WTC11 (cell line): ENCODE measurements at regions of chrX and their contacts with region 1.

Region 1: GRCh38 chrX:119852382-119853353 is at the start of gene UPF3B:
- DNase-seq: peak; percentile 95
- ATAC-seq: peak; percentile 97
- H3K4me3 Mint-ChIP-seq: peak within 1 kb of the TSS; percentile 90
- H3K27ac Mint-ChIP-seq: peak within 1 kb of the TSS; percentile 97
- H3K4me1 Mint-ChIP-seq: 0 out of 2 replicates have a peak, but pooled peaks cover 4% of the 10 kb centered on the region
- H3K27me3 Mint-ChIP-seq: no peaks in the 10 kb centered on the region; the same call in 1 of the 2 replicates
- CTCF ChIP-seq: no peak
- total RNA-seq, gene UPF3B: 19.2 to 23.1 TPM (median 23.0 TPM) in 3 replicates

Region 2: DNA sequence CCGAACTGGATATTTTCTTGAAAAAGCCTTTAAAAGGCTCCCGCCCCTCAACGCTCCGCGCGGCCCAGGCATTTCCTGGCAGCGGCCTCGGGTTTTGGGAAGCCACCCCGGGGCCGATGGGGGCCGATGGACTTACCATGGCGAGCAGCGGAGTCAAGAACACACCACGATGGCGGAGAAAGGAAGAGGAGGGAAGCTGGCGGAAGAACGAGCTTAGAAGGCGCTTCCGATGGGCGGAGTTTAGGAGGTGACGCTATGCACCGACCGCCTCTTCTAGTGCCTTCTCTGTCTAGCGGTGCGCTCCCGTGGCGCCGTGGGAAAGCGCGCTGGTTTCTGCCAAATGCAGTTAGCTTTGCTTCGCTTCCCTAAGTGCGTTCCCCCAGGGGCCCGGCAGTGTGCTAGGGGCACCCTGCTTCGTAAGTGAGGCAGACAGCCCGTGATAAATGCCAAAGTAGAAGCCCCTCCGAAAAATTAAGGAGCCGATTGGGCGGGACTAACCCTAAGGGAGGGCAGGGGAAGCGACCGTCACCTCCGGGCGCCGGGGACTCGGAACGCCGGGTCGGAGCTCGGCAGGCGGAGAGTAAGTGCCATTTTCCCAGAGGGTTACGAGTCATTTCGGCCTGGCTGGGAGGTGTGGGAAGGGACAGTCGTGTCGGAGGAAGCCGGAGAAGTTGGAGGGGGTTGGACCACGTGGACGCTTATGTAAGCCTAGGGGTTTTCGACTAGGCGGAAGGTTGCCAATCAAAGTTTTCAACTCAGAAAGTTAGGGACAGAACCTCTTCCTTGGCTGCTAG is 61.0 kb before region 1 on chrX and contains the start of gene RPL39:
- CTCF ChIA-PET with region 1: no interaction called
- POLR2A ChIA-PET with region 1: interaction called, 15 read pairs
- DNase-seq: peak; percentile 78
- ATAC-seq: peak; percentile 89
- H3K4me3 Mint-ChIP-seq: peak within 1 kb of the TSS; percentile 95
- H3K27ac Mint-ChIP-seq: peak within 1 kb of the TSS; percentile 95
- H3K4me1 Mint-ChIP-seq: peaks cover 22% of the 10 kb centered on the region
- H3K27me3 Mint-ChIP-seq: no peaks in the 10 kb centered on the region
- CTCF ChIP-seq: no peak
- total RNA-seq, gene RPL39: 1,551 to 1,842 TPM (median 1,763 TPM) in 3 replicates

Region 3: GRCh38 chrX:119828446-119828845 is 24.2 kb before region 1 on chrX:
- CTCF ChIA-PET with region 1: no interaction called
- POLR2A ChIA-PET with region 1: no interaction called
- DNase-seq: no peak
- ATAC-seq: no peak
- H3K4me3 Mint-ChIP-seq: no peak overlapping the region
- H3K27ac Mint-ChIP-seq: no peak overlapping the region
- H3K4me1 Mint-ChIP-seq: no peaks in the 10 kb centered on the region
- H3K27me3 Mint-ChIP-seq: no peaks in the 10 kb centered on the region
- CTCF ChIP-seq: no peak

Region 4: DNA sequence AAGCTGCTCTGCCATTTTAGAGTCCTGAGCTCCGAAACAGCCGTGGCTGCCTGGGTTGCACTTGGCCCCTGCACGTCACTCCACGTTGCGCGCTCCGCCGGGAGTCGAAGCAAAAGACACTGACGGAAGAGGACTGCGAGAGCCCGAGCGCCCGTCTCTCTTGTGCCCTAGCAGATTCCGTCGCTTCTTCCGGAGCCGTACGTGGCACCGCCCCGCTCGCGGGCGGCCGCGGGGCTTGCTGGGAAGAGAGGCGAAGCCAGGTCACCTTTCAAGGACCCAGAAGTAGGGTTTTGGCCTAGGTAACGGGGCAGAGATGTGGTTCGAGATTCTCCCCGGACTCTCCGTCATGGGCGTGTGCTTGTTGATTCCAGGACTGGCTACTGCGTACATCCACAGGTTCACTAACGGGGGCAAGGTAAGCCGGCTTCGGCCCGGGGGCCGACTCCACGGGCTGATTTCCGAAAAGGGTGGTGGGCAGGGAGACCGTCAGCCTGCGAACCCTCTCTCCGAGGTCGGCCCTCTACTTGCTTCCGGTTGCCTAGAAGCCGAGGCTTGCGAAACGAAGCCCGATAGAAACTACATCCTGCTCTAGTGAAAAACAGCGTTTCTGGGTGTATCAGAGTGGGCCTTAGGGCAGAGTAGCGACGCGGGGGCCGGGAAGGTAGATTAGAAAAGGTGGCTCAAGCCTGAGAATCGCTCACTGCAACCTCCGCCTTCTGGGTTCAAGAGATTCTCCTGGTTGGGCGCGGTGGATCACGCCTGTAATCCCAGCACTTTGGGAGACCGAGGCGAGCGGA is 19.1 kb after region 1 on chrX and contains the starts of genes NDUFA1 and RNF113A:
- CTCF ChIA-PET with region 1: interaction called, 4 read pairs
- POLR2A ChIA-PET with region 1: interaction called, 12 read pairs
- DNase-seq: peak; percentile 70
- ATAC-seq: peak; percentile 94
- H3K4me3 Mint-ChIP-seq: peak within 1 kb of the TSS; percentile 90
- H3K27ac Mint-ChIP-seq: peak within 1 kb of the TSS; percentile 97
- H3K4me1 Mint-ChIP-seq: peaks cover 10% of the 10 kb centered on the region; the same call in 1 of the 2 replicates
- H3K27me3 Mint-ChIP-seq: no peaks in the 10 kb centered on the region
- CTCF ChIP-seq: no peak
- total RNA-seq, gene NDUFA1: 84.3 to 89.9 TPM (median 89.4 TPM) in 3 replicates
- total RNA-seq, gene RNF113A: 16.5 to 16.9 TPM (median 16.6 TPM) in 3 replicates

Region 5: GRCh38 chrX:119887721-119888425 is 35.2 kb after region 1 on chrX:
- CTCF ChIA-PET with region 1: interaction called, 14 read pairs
- POLR2A ChIA-PET with region 1: no interaction called
- DNase-seq: peak; percentile 86
- ATAC-seq: peak; percentile 96
- H3K4me3 Mint-ChIP-seq: peak overlapping the region; percentile 64
- H3K27ac Mint-ChIP-seq: no peak overlapping the region
- H3K4me1 Mint-ChIP-seq: no peaks in the 10 kb centered on the region
- H3K27me3 Mint-ChIP-seq: no peaks in the 10 kb centered on the region
- CTCF ChIP-seq: peak; percentile 64

Region 6: GRCh38 chrX:119960625-119961024 is 108.0 kb after region 1 on chrX:
- CTCF ChIA-PET with region 1: no interaction called
- POLR2A ChIA-PET with region 1: no interaction called
- DNase-seq: no peak
- ATAC-seq: no peak
- H3K4me3 Mint-ChIP-seq: no peak overlapping the region
- H3K27ac Mint-ChIP-seq: no peak overlapping the region
- H3K4me1 Mint-ChIP-seq: no peaks in the 10 kb centered on the region
- H3K27me3 Mint-ChIP-seq: peaks cover 28% of the 10 kb centered on the region
- CTCF ChIP-seq: no peak

Region 7: GRCh38 chrX:120015145-120016067 is 162.7 kb after region 1 on chrX:
- CTCF ChIA-PET with region 1: no interaction called
- POLR2A ChIA-PET with region 1: no interaction called
- DNase-seq: no peak
- ATAC-seq: peak; percentile 65
- H3K4me3 Mint-ChIP-seq: peak overlapping the region; percentile 75
- H3K27ac Mint-ChIP-seq: no peak overlapping the region
- H3K4me1 Mint-ChIP-seq: peaks cover 9% of the 10 kb centered on the region
- H3K27me3 Mint-ChIP-seq: peaks cover 99% of the 10 kb centered on the region
- CTCF ChIP-seq: no peak